Left cardiac atrium (tissue), 4 donors: ENCODE measurements at regions of chr2 and their contacts with region 1.

Region 1: GRCh38 chr2:137838255-137839092 is 125.8 kb upstream of the HNMT start:
- DNase-seq: no peak
- ATAC-seq: peak in 1 of 2 donors; percentile 38

Region 2: DNA sequence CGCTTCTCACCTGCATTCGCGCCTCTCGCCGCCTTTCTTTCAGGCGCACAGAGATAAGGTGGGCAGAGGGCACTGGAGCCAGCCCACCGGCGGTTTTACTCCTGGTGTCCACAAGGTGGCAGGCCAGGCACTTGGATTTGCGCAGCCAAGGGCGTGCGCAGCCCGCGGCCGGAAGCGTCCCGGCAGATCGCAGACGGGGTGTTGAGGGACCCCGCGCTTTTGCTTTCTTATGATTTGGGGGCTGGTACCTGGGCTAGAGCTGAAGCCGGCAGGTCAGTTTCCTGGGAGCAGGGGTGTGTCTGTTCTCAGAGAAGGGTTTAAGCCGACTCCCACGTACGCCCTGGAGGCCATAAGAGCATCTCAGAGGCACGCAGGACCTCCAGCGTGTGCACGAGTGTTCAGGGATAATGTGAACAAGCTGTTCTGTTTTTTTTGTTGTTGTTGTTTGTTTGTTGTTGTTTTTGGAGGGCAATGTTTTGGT is 1414.9 kb before region 1 on chr2:
- intact Hi-C with region 1: loop called (anchors 5 to 10 kb)
- DNase-seq: peak; percentile 75
- ATAC-seq: peak; percentile 95

Region 3: DNA sequence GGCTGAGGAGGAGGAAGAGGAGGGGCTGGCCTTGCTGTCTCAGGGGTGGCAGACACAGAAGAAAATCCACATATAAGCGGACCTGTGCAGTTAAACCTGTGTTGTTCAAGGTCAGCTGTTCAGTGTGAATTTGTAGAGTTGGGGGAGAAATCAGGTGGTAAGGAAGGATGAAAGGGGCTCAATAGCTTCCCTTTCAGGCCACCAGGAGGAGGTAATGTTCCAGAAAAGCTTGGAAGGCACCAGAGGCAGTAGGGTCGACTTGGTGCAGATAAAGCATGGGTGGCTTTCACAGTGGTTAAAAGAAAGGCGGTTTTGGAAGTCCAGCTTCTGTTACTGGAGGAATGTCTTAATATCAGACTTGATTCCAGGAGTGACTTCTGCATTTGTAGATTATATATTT is 905.8 kb before region 1 on chr2:
- intact Hi-C with region 1: loop called in 1 of 2 experiments (anchors 5 kb)
- DNase-seq: no peak
- ATAC-seq: no peak

Region 4: DNA sequence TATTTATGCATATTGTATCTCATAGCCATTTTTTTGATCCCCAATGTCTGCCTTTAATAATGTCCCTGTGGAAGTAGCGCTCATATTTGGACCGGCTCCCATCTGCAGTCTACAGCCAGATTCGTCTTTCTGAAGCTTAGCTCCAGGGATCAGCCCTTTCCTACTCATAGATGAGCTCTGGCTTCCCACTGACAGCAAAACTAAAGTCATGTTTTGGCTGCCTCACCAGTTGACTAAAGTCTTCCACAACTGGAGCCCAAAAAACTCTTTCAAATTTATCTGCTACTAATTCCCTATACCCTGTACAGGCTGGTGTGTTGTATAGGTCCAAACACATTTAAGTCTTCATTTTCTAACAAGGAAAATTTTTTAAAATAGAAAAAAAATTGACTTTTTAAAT is 168.4 kb before region 1 on chr2:
- intact Hi-C with region 1: no loop called
- DNase-seq: no peak
- ATAC-seq: no peak

Region 5: GRCh38 chr2:137776697-137777096 is 61.8 kb before region 1 on chr2:
- intact Hi-C with region 1: no loop called
- DNase-seq: no peak
- ATAC-seq: no peak